Calu3 (cell line): ENCODE measurements at regions of chr5 and their contacts with region 1.

Region 1: DNA sequence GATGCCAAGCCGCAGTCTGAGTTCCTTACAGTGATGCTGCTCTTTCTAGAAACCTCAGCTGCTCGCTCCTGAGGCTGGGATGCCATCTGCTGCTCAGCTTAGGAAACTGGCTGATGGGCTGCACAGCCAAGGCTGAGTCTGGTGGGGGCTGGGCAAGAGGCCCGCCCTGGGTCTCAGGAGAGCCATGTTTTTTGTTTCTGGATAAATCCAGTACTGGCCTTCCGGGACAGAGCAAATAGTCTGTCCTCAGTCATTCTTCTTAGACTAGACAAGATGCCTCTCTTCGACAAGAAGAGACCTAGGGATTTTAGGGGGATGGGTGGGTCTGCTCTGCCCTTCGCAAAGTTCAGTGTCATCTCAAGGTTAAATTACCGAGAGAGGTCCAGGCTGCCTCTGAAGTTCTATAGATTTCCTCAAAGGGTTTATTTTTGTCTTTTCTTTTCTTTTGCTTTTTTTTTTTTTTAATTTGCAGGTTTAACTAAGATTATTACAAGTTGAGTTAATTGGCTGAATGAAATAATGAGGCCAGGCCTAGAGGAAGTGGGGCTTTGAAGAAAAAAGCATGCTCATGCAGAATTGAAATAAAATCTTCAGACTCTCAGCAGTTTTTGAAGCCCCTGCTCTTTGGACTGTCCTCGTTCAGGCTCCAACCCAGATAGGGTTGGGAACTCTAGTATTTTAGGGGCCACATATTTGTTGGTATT is 30.6 kb upstream of the MATR3 start:
- DNase-seq: peak; percentile 92
- H3K4me3 Mint-ChIP-seq: no peak overlapping the region
- H3K27ac Mint-ChIP-seq: no peak overlapping the region
- H3K4me1 Mint-ChIP-seq: peaks cover 8% of the 10 kb centered on the region
- H3K27me3 Mint-ChIP-seq: peaks cover 34% of the 10 kb centered on the region
- CTCF ChIP-seq: peak; percentile 75

Region 2: GRCh38 chr5:138641547-138642298 is 621.2 kb before region 1 on chr5:
- CTCF ChIA-PET with region 1: interaction called, 4 read pairs
- intact Hi-C with region 1: loop called (anchors 5 kb)
- DNase-seq: peak; percentile 91
- H3K4me3 Mint-ChIP-seq: no peak overlapping the region
- H3K27ac Mint-ChIP-seq: no peak overlapping the region
- H3K4me1 Mint-ChIP-seq: no peaks in the 10 kb centered on the region
- H3K27me3 Mint-ChIP-seq: peaks cover 25% of the 10 kb centered on the region
- CTCF ChIP-seq: peak; percentile 89

Region 3: GRCh38 chr5:139363937-139364336 is 101.0 kb after region 1 on chr5:
- CTCF ChIA-PET with region 1: no interaction called
- intact Hi-C with region 1: no loop called
- DNase-seq: no peak
- H3K4me3 Mint-ChIP-seq: no peak overlapping the region
- H3K27ac Mint-ChIP-seq: peak overlapping the region; percentile 40
- H3K4me1 Mint-ChIP-seq: no peaks in the 10 kb centered on the region
- H3K27me3 Mint-ChIP-seq: no peaks in the 10 kb centered on the region
- CTCF ChIP-seq: no peak